ENCODE measurements at regions of chr6 and their contacts with region 1.

Region 1: DNA sequence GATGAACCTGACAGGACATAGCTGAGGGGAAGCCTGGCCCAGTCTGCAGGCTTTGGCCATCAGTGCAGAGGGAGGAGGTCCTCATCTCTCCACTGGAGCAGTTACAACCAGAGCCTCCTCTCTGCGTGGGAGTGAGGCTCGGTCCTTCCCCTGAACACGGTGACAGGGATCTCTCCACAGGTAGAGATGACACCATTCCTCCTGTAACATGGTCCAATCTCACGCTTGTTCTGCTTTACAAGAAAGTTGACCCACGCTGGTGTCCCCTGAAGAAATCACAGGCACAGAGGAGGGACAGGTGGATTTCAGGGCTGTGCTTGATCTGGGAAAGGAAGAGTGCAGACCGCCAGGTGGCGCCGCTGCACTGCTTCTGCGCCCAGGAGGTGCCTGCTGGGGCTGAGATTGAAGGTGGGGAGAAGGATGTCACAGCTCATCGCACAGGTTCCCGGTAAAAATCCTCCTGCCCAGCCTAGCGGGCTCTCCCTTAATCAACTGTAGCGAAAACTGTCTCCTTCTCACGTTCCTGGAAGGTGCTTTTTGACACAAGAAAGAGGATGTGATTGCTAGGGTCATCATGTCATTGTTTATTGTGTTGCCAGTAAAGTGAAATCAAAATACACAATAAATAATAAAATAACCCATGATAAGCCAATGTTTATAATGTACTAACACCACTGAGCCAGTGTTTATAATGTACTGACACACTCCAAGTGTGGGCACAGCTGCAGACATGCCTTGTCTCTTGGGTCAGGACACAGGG is 20.4 kb downstream of the HLA-G start:
- DNase-seq: peak in 1 of 2 donors; percentile 86
- H3K4me3 ChIP-seq: no peak overlapping the region
- H3K27ac ChIP-seq: no peak overlapping the region
- H3K4me1 ChIP-seq: peaks cover 0 to 5% of the 10 kb centered on the region in 2 donors
- H3K27me3 ChIP-seq: no peaks in the 10 kb centered on the region
- CTCF ChIP-seq: peak; percentile 81 to 93 (median 90)

Region 2: GRCh38 chr6:28001351-28002135 is 1846.5 kb before region 1 on chr6:
- intact Hi-C with region 1: no loop called
- DNase-seq: no peak
- H3K4me3 ChIP-seq: no peak overlapping the region
- H3K27ac ChIP-seq: no peak overlapping the region
- H3K4me1 ChIP-seq: no peaks in the 10 kb centered on the region
- H3K27me3 ChIP-seq: no peaks in the 10 kb centered on the region
- CTCF ChIP-seq: no peak

Region 3: DNA sequence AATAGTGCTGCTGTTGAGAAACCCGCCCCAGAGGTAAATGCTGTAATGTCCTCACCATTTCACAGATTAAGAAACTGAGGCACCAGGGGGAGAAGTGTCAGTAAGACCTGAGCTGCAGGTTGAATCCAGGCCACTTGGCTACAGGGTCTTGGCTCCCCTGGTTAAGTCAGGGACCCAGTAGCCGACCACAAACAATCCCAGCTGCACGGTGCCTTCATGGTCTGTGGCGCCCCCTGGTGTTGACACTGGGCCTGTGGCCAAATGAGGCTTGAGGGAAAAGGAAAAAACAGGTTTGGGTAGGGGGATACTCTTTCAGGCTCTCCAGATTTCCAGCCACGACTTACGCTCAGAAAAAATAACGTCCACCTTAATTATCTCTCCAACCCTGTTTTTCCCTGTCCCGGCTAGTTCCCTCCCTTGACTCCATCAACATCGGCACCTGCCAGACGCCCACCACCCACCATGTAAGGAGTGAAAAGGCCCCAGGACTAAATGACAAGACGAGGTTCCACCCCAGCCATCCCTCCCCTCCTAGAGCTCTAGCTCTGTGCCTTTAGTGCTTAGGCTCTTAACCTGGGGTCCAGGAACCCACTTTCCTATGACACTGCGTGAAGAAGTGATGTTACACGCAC is 165.4 kb after region 1 on chr6:
- intact Hi-C with region 1: loop called (anchors 1 kb)
- DNase-seq: no peak
- H3K4me3 ChIP-seq: no peak overlapping the region
- H3K27ac ChIP-seq: no peak overlapping the region
- H3K4me1 ChIP-seq: no peaks in the 10 kb centered on the region
- H3K27me3 ChIP-seq: no peaks in the 10 kb centered on the region
- CTCF ChIP-seq: peak; percentile 27 to 85 (median 49)

Region 4: DNA sequence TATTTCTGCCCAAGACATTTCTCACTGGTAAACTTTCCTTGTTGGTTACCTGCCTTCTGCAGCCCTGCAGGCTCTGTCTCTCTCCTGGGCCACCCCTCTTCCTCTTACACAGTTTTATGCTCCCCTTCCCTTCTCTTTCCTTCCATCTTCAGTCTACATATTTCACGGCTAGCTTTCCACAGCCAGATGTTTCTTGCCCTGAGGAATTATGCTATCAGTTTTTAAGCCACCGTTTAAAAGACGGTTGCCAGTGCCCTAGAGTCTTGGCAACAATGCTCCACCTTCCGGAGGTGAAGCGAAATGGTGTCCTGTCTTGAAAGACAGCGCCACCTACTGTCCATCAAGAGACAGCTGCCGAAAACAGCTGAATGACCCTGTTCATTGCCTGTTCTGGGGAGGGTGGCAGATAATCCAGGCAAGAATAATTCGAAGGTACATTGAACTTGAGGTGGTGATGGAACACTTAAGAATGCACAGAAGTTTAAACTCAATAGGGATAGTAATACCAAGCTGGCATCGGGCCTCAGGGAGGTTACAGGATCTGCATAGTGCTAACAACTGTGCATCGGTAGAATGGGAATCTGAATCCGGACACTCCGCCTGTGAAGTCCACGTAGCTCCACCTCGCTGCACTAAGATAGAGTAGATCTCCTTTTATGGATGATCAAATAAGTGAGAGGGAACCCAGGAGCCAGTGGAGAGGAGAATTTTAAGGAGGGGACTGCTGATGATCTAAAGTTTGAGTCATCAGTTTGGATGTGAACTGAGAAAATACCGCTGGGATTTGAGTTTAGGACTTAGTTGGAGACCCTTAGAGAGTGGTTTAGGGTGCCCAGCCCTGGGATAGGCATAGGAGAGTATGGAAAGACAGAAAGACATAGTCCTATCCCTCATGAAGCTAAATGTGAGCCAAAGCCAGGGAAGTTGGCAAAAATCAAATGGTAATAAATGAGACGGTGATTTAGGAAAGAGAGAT is 283.1 kb after region 1 on chr6:
- intact Hi-C with region 1: loop called (anchors 10 kb)
- DNase-seq: peak in 1 of 2 donors; percentile 80
- H3K4me3 ChIP-seq: no peak overlapping the region
- H3K27ac ChIP-seq: no peak overlapping the region
- H3K4me1 ChIP-seq: peaks cover 0 to 4% of the 10 kb centered on the region in 2 donors
- H3K27me3 ChIP-seq: peaks cover 19% of the 10 kb centered on the region
- CTCF ChIP-seq: peak; percentile 88 to 95 (median 91)

Region 5: GRCh38 chr6:30700340-30700739 is 852.3 kb after region 1 on chr6:
- intact Hi-C with region 1: no loop called
- DNase-seq: no peak
- H3K4me3 ChIP-seq: no peak overlapping the region
- H3K27ac ChIP-seq: no peak overlapping the region
- H3K4me1 ChIP-seq: peaks cover 0 to 6% of the 10 kb centered on the region in 2 donors
- H3K27me3 ChIP-seq: no peaks in the 10 kb centered on the region
- CTCF ChIP-seq: no peak

Measured in ascending aorta (tissue), 2 donors.